ENCODE measurements at regions of chr17 and their contacts with region 1.

Region 1: GRCh38 chr17:8138672-8139371 is 13.4 kb downstream of the PER1 start:
- DNase-seq: peak; percentile 73 to 94 (median 77)
- ATAC-seq: peak; percentile 95
- H3K4me3 ChIP-seq: peak overlapping the region; percentile 59
- H3K27ac ChIP-seq: peak overlapping the region; percentile 95
- H3K4me1 ChIP-seq: peaks cover 6 to 28% of the 10 kb centered on the region in 2 experiments; a peak in 4 of 5 replicates
- H3K27me3 ChIP-seq: no peaks in the 10 kb centered on the region
- CTCF ChIP-seq: peak; percentile 84 to 98 (median 96)
- EP300 ChIP-seq: peak; percentile 42; the same call in 1 of the 2 replicates
- POLR2A ChIP-seq: no peak; the same call in 1 of the 2 replicates
- RAD21 ChIP-seq: peak; percentile 75 to 77

Region 2: DNA sequence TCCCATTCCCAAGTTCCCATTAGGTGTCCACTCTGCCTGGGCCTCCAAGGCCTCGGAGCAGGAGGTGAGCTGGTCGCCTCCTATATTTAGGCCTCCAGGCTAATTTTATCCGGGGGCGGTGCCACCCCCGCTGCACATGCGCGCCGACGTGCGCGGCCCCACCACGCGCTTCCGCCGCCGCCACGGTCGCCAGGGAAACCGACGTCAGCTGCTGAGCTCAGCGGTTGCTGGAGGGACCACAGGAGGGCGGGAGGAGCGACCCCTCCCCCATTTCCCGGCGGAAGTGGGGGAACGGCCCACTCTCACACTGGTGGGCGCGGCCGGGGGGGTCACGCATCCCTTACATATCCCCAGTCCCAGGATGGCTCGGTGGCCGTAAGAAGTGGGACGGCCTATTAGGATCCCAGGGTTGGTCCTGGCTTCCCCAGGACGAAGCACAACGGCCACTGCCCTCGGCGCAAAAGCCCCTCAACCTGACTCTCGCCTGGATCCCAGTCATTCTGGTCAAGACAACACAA is 12.4 kb after region 1 on chr17:
- CTCF ChIA-PET with region 1: no interaction called
- POLR2A ChIA-PET with region 1: interaction called, 19 read pairs
- in situ Hi-C with region 1: no loop called
- intact Hi-C with region 1: loop called (anchors 1 kb)
- DNase-seq: peak; percentile 69 to 88 (median 72)
- ATAC-seq: peak; percentile 69
- H3K4me3 ChIP-seq: peak overlapping the region; percentile 53
- H3K27ac ChIP-seq: peak overlapping the region; percentile 78
- H3K4me1 ChIP-seq: peaks cover 31 to 67% of the 10 kb centered on the region in 2 experiments
- H3K27me3 ChIP-seq: no peaks in the 10 kb centered on the region
- CTCF ChIP-seq: no peak
- EP300 ChIP-seq: no peak
- POLR2A ChIP-seq: no peak; the same call in 1 of the 2 replicates
- RAD21 ChIP-seq: no peak

Region 3: GRCh38 chr17:8156246-8156992 is 17.6 kb after region 1 on chr17:
- CTCF ChIA-PET with region 1: interaction called, 3 read pairs
- POLR2A ChIA-PET with region 1: interaction called, 19 read pairs
- in situ Hi-C with region 1: no loop called
- intact Hi-C with region 1: loop called (anchors 1 kb)
- DNase-seq: peak; percentile 88 to 99 (median 92)
- ATAC-seq: peak; percentile 83
- H3K4me3 ChIP-seq: peak overlapping the region; percentile 52
- H3K27ac ChIP-seq: peak overlapping the region; percentile 86
- H3K4me1 ChIP-seq: peaks cover 42 to 68% of the 10 kb centered on the region in 2 experiments
- H3K27me3 ChIP-seq: no peaks in the 10 kb centered on the region
- CTCF ChIP-seq: peak; percentile 30 to 43 (median 43); a peak in 4 of 6 replicates
- EP300 ChIP-seq: peak; percentile 30; the same call in 1 of the 2 replicates
- POLR2A ChIP-seq: peak; percentile 71
- RAD21 ChIP-seq: peak in 1 of 2 experiments; percentile 5; a peak in 1 of 4 replicates

Region 4: DNA sequence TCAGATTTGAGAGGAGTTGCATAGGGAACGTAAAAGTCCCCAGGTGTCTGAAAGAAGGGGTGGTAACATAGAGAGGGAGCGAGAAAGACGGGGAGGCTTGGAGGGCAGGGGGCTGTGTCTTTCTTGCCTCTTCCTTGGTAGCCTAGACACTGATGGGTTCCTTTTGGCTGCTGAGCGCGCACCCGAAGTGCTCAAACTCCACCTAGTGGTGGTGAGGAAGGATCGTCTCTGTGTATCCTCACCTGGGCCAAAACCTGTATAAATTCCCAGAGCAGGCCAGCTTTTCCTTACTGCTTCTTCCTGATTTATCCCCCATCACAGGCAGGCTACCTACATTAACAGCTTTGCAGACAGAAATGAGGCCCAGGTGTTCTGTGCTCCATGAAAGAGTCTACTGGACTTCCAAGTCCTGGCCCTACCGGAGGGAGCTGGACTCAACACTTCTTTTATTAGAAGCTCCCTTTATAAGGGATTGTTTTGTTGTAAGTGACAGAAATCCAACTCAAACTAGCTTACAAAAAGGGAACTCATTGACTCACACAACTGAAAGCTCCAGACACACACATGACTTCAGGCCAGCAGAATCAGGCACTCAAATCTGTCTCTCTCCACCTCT is 161.9 kb after region 1 on chr17:
- CTCF ChIA-PET with region 1: no interaction called
- POLR2A ChIA-PET with region 1: no interaction called
- in situ Hi-C with region 1: no loop called
- intact Hi-C with region 1: loop called (anchors 5 kb)
- DNase-seq: peak; percentile 62 to 73 (median 65)
- ATAC-seq: peak; percentile 93
- H3K4me3 ChIP-seq: no peak overlapping the region
- H3K27ac ChIP-seq: no peak overlapping the region
- H3K4me1 ChIP-seq: peaks cover 4 to 7% of the 10 kb centered on the region in 2 experiments; a peak in 4 of 5 replicates
- H3K27me3 ChIP-seq: no peaks in the 10 kb centered on the region
- CTCF ChIP-seq: peak; percentile 75 to 81 (median 81)
- EP300 ChIP-seq: no peak
- POLR2A ChIP-seq: no peak
- RAD21 ChIP-seq: peak; percentile 59 to 86

Measured in K562 (cell line).